ENCODE measurements at regions of chr16 and their contacts with region 1.

Region 1: GRCh38 chr16:27273670-27274423 is 5.3 kb upstream of the NSMCE1 start:
- DNase-seq: peak; percentile 29
- H3K4me3 Mint-ChIP-seq: no peak overlapping the region
- H3K27ac Mint-ChIP-seq: peak overlapping the region; percentile 90
- H3K4me1 Mint-ChIP-seq: peaks cover 62% of the 10 kb centered on the region
- H3K27me3 Mint-ChIP-seq: peaks cover 12% of the 10 kb centered on the region

Region 2: GRCh38 chr16:27286451-27286850 is 12.6 kb after region 1 on chr16:
- CTCF ChIA-PET with region 1: interaction called, 4 read pairs
- POLR2A ChIA-PET with region 1: interaction called, 32 read pairs
- DNase-seq: no peak
- H3K4me3 Mint-ChIP-seq: no peak overlapping the region
- H3K27ac Mint-ChIP-seq: no peak overlapping the region
- H3K4me1 Mint-ChIP-seq: peaks cover 66% of the 10 kb centered on the region
- H3K27me3 Mint-ChIP-seq: peaks cover 20% of the 10 kb centered on the region

Region 3: DNA sequence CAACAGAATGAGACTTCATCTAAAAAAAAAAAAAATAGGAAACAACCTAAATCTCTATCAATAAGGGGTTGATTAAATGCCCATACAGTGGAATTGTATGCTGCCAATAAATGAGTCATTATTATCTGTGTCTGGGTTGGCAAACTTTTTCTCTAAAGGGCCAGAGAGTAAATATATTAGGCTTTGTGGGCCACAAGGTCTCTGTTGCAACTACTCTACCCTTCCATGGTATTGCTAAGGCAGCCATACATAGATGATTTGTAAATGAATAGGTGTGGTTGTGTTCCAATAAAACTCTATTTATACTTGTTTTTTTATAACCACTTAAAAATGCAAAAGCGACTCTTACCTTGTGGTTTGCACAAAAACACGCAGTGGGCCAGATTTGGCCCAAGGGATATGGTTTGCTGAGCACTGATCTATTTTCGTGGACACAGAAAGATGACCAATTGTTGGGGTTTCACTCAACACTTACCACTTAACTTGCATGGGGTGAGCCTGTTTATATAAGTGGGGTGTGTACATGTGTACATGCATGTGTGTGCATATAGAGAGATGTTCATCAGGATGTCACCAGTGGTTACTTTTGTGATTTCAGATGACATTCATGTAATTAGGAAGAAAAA is 27.5 kb after region 1 on chr16:
- CTCF ChIA-PET with region 1: no interaction called
- POLR2A ChIA-PET with region 1: interaction called, 14 read pairs
- DNase-seq: no peak
- H3K4me3 Mint-ChIP-seq: no peak overlapping the region
- H3K27ac Mint-ChIP-seq: no peak overlapping the region
- H3K4me1 Mint-ChIP-seq: peaks cover 25% of the 10 kb centered on the region
- H3K27me3 Mint-ChIP-seq: peaks cover 4% of the 10 kb centered on the region

Region 4: DNA sequence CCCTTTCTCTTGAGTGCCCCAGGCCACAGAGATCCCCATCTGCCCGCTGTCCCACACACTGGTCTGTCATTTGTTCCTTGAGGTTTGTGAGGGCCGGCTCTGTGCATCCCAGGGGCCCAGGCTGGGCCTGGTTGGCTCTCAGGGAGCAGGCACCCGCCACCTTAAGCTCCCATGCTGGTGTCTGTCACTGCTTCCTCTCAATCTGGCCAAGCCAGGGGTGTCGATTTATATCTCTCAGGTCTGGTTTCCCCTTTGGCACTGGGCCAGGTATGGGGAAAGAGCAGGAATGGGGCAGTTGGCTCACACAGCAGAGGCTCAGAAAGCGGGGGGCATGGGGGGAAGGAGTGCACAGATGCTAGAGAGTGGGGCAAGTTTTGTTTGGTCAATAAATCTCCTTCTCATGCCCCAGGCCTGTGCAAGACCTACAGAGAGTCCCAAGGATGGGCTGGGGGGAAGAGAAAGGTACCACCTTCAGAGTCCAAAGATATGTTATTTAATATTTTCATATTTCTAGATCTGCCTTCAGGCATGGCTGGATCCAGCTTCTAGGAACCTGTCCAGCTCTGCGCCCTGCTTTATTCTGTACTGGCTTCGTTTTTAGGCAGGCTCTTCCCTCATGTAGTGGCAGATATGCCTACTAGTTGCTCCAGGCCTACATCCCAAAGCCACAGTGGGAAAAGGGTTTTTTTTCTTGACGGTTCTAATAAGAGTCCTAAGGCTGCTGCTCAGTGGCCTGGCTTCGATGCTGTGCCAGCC is 74.3 kb after region 1 on chr16:
- CTCF ChIA-PET with region 1: no interaction called
- POLR2A ChIA-PET with region 1: no interaction called
- DNase-seq: no peak
- H3K4me3 Mint-ChIP-seq: no peak overlapping the region
- H3K27ac Mint-ChIP-seq: peak overlapping the region; percentile 51
- H3K4me1 Mint-ChIP-seq: peaks cover 16% of the 10 kb centered on the region
- H3K27me3 Mint-ChIP-seq: no peaks in the 10 kb centered on the region

Region 5: GRCh38 chr16:27401768-27402568 is 128.1 kb after region 1 on chr16 and contains the start of gene IL21R:
- CTCF ChIA-PET with region 1: no interaction called
- POLR2A ChIA-PET with region 1: no interaction called
- DNase-seq: peak; percentile 88
- H3K4me3 Mint-ChIP-seq: peak within 1 kb of the TSS; percentile 92
- H3K27ac Mint-ChIP-seq: peak within 1 kb of the TSS; percentile 96
- H3K4me1 Mint-ChIP-seq: peaks cover 70% of the 10 kb centered on the region
- H3K27me3 Mint-ChIP-seq: peaks cover 6% of the 10 kb centered on the region
- total RNA-seq, gene IL21R: 29.2 to 29.5 TPM